ENCODE measurements at regions of chr6 and their contacts with region 1.

Region 1: GRCh38 chr6:28335564-28336283 is at the start of gene ZSCAN31:
- DNase-seq: peak; percentile 43 to 87 (median 76)
- ATAC-seq: peak; percentile 95
- H3K4me3 ChIP-seq: peak within 1 kb of the TSS; percentile 97
- H3K4me3 Mint-ChIP-seq: peak within 1 kb of the TSS in 1 of 10 donors; percentile 58
- H3K27ac ChIP-seq: peak within 1 kb of the TSS; percentile 92
- H3K27ac Mint-ChIP-seq: peak within 1 kb of the TSS in 1 of 9 donors; percentile 47
- H3K4me1 ChIP-seq: peaks cover 9 to 10% of the 10 kb centered on the region in 2 donors
- H3K4me1 Mint-ChIP-seq: peaks cover 0 to 16% (median 9%) of the 10 kb centered on the region in 7 donors
- H3K27me3 ChIP-seq: no peaks in the 10 kb centered on the region
- H3K27me3 Mint-ChIP-seq: peaks cover 0 to 3% (median 0%) of the 10 kb centered on the region in 5 donors
- total RNA-seq, gene ZSCAN31: 0.93 to 2.4 (median 1.2) TPM

Region 2: DNA sequence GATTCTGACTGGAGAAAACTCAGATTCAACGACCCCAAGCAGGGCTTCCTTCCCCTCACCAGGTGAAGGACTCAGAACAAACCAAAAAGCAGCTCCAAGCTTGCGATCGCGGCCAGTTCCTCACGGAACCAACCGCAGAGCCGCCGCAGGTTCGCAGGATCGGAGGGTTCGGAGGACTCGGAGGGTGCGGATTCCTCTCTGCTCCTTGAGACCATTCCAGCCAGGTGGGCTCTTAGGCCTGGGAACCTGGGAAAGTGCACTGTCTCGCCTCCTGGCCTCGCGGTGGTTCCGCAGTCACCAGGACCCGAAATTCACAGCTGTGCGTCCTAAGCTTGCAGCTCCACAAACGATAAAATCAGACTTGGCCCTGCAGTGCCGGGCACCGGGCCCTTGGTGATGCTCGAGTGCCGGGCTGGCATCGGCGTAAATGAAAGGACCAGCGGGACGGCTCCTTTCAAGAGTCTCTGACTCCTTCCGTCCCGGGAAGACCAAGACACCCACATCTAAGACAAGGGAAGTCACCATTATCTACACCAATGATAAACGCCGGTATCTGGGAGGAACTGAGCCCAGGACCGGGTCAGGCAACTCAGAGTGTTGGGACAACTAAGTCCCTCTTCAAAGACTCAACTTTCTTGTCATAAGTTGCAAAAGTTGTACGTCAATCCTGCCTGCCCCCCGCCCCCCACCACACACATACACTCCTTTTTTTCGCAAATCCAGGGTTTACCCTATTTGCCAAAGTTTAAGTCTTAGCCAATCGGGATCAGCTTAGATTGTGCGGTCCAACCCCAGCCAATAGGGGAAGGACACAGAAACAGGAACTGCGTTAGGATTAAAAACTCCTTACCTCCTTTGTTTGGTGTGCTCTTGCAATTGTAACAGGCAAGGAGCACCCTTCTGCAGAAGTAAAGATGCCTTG is 1158.0 kb before region 1 on chr6:
- CTCF ChIA-PET with region 1: no interaction called
- POLR2A ChIA-PET with region 1: no interaction called
- intact Hi-C with region 1: loop called in 1 of 2 experiments (anchors 5 kb)
- DNase-seq: peak; percentile 49 to 78 (median 66)
- ATAC-seq: peak; percentile 83
- H3K4me3 ChIP-seq: peak overlapping the region; percentile 99
- H3K4me3 Mint-ChIP-seq: peak overlapping the region; percentile 90 to 98 (median 96)
- H3K27ac ChIP-seq: peak overlapping the region; percentile 74
- H3K27ac Mint-ChIP-seq: peak overlapping the region; percentile 79 to 100 (median 95)
- H3K4me1 ChIP-seq: peaks cover 0 to 3% of the 10 kb centered on the region in 2 donors
- H3K4me1 Mint-ChIP-seq: peaks cover 0 to 33% (median 14%) of the 10 kb centered on the region in 7 donors
- H3K27me3 ChIP-seq: no peaks in the 10 kb centered on the region
- H3K27me3 Mint-ChIP-seq: peaks cover 0 to 37% (median 0%) of the 10 kb centered on the region in 5 donors

Region 3: GRCh38 chr6:27374824-27375612 is 960.7 kb before region 1 on chr6:
- CTCF ChIA-PET with region 1: no interaction called
- POLR2A ChIA-PET with region 1: no interaction called
- intact Hi-C with region 1: loop called in 1 of 2 experiments (anchors 10 kb)
- DNase-seq: peak; percentile 31 to 68 (median 62)
- ATAC-seq: peak; percentile 98
- H3K4me3 ChIP-seq: peak overlapping the region; percentile 81
- H3K4me3 Mint-ChIP-seq: peak overlapping the region; percentile 68 to 94 (median 92)
- H3K27ac ChIP-seq: peak overlapping the region; percentile 68
- H3K27ac Mint-ChIP-seq: peak overlapping the region in 8 of 9 donors; percentile 81 to 93 (median 87)
- H3K4me1 ChIP-seq: peaks cover 13 to 17% of the 10 kb centered on the region in 2 donors
- H3K4me1 Mint-ChIP-seq: peaks cover 16 to 35% (median 28%) of the 10 kb centered on the region in 7 donors
- H3K27me3 ChIP-seq: no peaks in the 10 kb centered on the region
- H3K27me3 Mint-ChIP-seq: peaks cover 0 to 6% (median under 1%) of the 10 kb centered on the region in 5 donors

Region 4: GRCh38 chr6:27847706-27848105 is 488.0 kb before region 1 on chr6:
- CTCF ChIA-PET with region 1: no interaction called
- POLR2A ChIA-PET with region 1: no interaction called
- intact Hi-C with region 1: no loop called
- DNase-seq: no peak
- ATAC-seq: no peak
- H3K4me3 ChIP-seq: no peak overlapping the region
- H3K4me3 Mint-ChIP-seq: no peak overlapping the region
- H3K27ac ChIP-seq: no peak overlapping the region
- H3K27ac Mint-ChIP-seq: no peak overlapping the region
- H3K4me1 ChIP-seq: no peaks in the 10 kb centered on the region
- H3K4me1 Mint-ChIP-seq: peaks cover 0 to 3% (median 0%) of the 10 kb centered on the region in 7 donors
- H3K27me3 ChIP-seq: no peaks in the 10 kb centered on the region
- H3K27me3 Mint-ChIP-seq: peaks cover 0 to 20% (median 4%) of the 10 kb centered on the region in 5 donors

Region 5: GRCh38 chr6:28104392-28105244 is 231.1 kb before region 1 on chr6:
- CTCF ChIA-PET with region 1: no interaction called
- POLR2A ChIA-PET with region 1: no interaction called
- intact Hi-C with region 1: loop called in 1 of 2 experiments (anchors 1 kb)
- DNase-seq: peak; percentile 68 to 82 (median 79)
- ATAC-seq: peak; percentile 99
- H3K4me3 ChIP-seq: peak overlapping the region; percentile 79
- H3K4me3 Mint-ChIP-seq: peak overlapping the region; percentile 86 to 95 (median 92)
- H3K27ac ChIP-seq: peak overlapping the region; percentile 76
- H3K27ac Mint-ChIP-seq: peak overlapping the region; percentile 76 to 96 (median 94)
- H3K4me1 ChIP-seq: peaks cover 0 to 7% of the 10 kb centered on the region in 2 donors
- H3K4me1 Mint-ChIP-seq: peaks cover 6 to 19% (median 9%) of the 10 kb centered on the region in 7 donors
- H3K27me3 ChIP-seq: no peaks in the 10 kb centered on the region
- H3K27me3 Mint-ChIP-seq: peaks cover 0 to 26% (median 16%) of the 10 kb centered on the region in 5 donors

Region 6: GRCh38 chr6:28349892-28350737 is 14.4 kb after region 1 on chr6 and contains the start of gene ZKSCAN3:
- CTCF ChIA-PET with region 1: interaction called, 6 read pairs
- POLR2A ChIA-PET with region 1: interaction called, 17 read pairs
- intact Hi-C with region 1: loop called (anchors 1 kb)
- DNase-seq: peak; percentile 53 to 83 (median 80)
- ATAC-seq: peak; percentile 98
- H3K4me3 ChIP-seq: peak within 1 kb of the TSS; percentile 80
- H3K4me3 Mint-ChIP-seq: peak within 1 kb of the TSS; percentile 94 to 100 (median 98)
- H3K27ac ChIP-seq: peak within 1 kb of the TSS; percentile 75
- H3K27ac Mint-ChIP-seq: peak within 1 kb of the TSS; percentile 90 to 97 (median 94)
- H3K4me1 ChIP-seq: peaks cover 0 to 7% of the 10 kb centered on the region in 2 donors
- H3K4me1 Mint-ChIP-seq: peaks cover 28 to 39% (median 35%) of the 10 kb centered on the region in 7 donors
- H3K27me3 ChIP-seq: peaks cover 0 to 4% of the 10 kb centered on the region in 2 donors
- H3K27me3 Mint-ChIP-seq: peaks cover 11 to 30% (median 12%) of the 10 kb centered on the region in 5 donors
- total RNA-seq, gene ZKSCAN3: 3.3 to 13.2 (median 5.8) TPM

Region 7: GRCh38 chr6:28443112-28443773 is 107.5 kb after region 1 on chr6 and contains the start of gene ZSCAN23:
- CTCF ChIA-PET with region 1: no interaction called
- POLR2A ChIA-PET with region 1: no interaction called
- intact Hi-C with region 1: loop called (anchors 5 kb)
- DNase-seq: peak; percentile 59 to 93 (median 88)
- ATAC-seq: peak; percentile 96
- H3K4me3 ChIP-seq: peak within 1 kb of the TSS; percentile 76
- H3K4me3 Mint-ChIP-seq: peak within 1 kb of the TSS; percentile 86 to 98 (median 96)
- H3K27ac ChIP-seq: peak within 1 kb of the TSS; percentile 60
- H3K27ac Mint-ChIP-seq: peak within 1 kb of the TSS; percentile 76 to 97 (median 93)
- H3K4me1 ChIP-seq: peaks cover 13 to 16% of the 10 kb centered on the region in 2 donors
- H3K4me1 Mint-ChIP-seq: peaks cover 15 to 38% (median 32%) of the 10 kb centered on the region in 7 donors
- H3K27me3 ChIP-seq: peaks cover 0 to 6% of the 10 kb centered on the region in 2 donors
- H3K27me3 Mint-ChIP-seq: peaks cover 9 to 36% (median 30%) of the 10 kb centered on the region in 5 donors
- total RNA-seq, gene ZSCAN23: 1.4 to 3.4 (median 2.4) TPM

Region 8: GRCh38 chr6:28606424-28607400 is 271.0 kb after region 1 on chr6:
- CTCF ChIA-PET with region 1: no interaction called
- POLR2A ChIA-PET with region 1: no interaction called
- intact Hi-C with region 1: no loop called
- DNase-seq: peak in 8 of 9 donors; percentile 35 to 57 (median 46)
- ATAC-seq: no peak
- H3K4me3 ChIP-seq: peak overlapping the region; percentile 15
- H3K4me3 Mint-ChIP-seq: peak overlapping the region; percentile 5 to 76 (median 66)
- H3K27ac ChIP-seq: no peak overlapping the region
- H3K27ac Mint-ChIP-seq: peak overlapping the region in 5 of 9 donors; percentile 31 to 91 (median 51)
- H3K4me1 ChIP-seq: peaks cover 0 to 6% of the 10 kb centered on the region in 2 donors
- H3K4me1 Mint-ChIP-seq: peaks cover 0 to 16% (median 9%) of the 10 kb centered on the region in 7 donors
- H3K27me3 ChIP-seq: peaks cover 3 to 8% of the 10 kb centered on the region in 2 donors
- H3K27me3 Mint-ChIP-seq: peaks cover 50 to 70% (median 66%) of the 10 kb centered on the region in 5 donors